Pancreas (tissue), 10 donors: ENCODE measurements at regions of chr6 and their contacts with region 1.

Region 1: GRCh38 chr6:130313206-130313605 is 52.6 kb upstream of the TMEM200A start:
- DNase-seq: no peak
- ATAC-seq: no peak
- H3K4me3 ChIP-seq: no peak overlapping the region
- H3K27ac ChIP-seq: no peak overlapping the region
- H3K4me1 ChIP-seq: no peaks in the 10 kb centered on the region
- H3K27me3 ChIP-seq: no peaks in the 10 kb centered on the region
- CTCF ChIP-seq: no peak

Region 2: GRCh38 chr6:130093546-130093945 is 219.7 kb before region 1 on chr6:
- intact Hi-C with region 1: no loop called
- DNase-seq: no peak
- ATAC-seq: no peak
- H3K4me3 ChIP-seq: no peak overlapping the region
- H3K27ac ChIP-seq: no peak overlapping the region
- H3K4me1 ChIP-seq: no peaks in the 10 kb centered on the region
- H3K27me3 ChIP-seq: no peaks in the 10 kb centered on the region
- CTCF ChIP-seq: no peak

Region 3: DNA sequence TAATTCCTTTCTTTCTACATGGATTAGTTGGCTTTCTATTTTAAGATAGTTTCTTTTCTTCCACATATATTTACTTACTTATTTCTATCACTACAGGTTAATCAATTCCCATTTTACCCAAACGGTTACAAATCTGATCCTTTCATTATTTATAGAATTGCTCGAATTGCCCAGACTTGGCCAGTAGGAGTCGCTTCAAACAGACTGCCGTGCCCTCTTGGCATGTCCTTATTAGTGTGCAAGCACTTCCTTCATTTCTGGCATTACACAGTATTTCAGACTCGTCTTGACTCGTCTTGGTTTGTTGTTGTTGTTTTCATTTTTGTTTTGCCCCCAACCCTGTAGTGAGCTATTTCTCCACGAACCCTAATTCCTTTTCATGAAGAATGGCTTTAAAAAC is 165.0 kb before region 1 on chr6:
- intact Hi-C with region 1: no loop called
- DNase-seq: no peak
- ATAC-seq: no peak
- H3K4me3 ChIP-seq: no peak overlapping the region
- H3K27ac ChIP-seq: no peak overlapping the region
- H3K4me1 ChIP-seq: no peaks in the 10 kb centered on the region
- H3K27me3 ChIP-seq: no peaks in the 10 kb centered on the region
- CTCF ChIP-seq: no peak

Region 4: DNA sequence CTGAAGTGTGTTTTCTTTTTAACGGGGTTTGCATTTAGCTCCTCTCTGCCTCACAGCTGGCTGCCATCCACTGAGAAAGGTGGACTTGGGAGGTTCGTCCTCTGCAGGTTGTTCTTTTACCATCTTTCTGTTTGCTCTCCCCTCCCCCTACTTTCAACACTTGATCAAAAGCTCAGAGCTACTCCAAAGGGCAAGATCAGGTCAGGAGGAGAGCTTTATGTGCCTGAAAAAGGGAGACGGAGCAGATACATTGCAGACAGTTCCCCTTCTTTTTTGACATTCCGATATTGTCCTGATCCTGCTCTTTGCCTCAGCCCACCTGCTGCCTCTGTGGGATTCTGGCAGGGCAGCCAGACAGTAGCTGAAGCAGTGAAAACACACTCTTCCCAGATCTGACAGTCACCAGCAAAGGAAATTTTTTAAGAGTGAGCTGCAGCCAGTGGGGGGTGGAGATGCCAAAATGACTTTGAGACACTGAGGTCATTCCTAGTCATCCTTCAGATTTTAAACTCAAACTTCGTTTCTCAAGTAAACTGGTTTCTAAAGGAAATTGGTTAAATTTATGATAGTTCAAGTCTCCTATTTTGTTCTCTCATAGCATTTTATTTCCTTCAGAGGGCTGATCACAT is 540.5 kb after region 1 on chr6:
- intact Hi-C with region 1: loop called in 1 of 3 experiments (anchors 10 kb)
- DNase-seq: no peak
- ATAC-seq: no peak
- H3K4me3 ChIP-seq: no peak overlapping the region
- H3K27ac ChIP-seq: no peak overlapping the region
- H3K4me1 ChIP-seq: no peaks in the 10 kb centered on the region
- H3K27me3 ChIP-seq: no peaks in the 10 kb centered on the region
- CTCF ChIP-seq: no peak